B cell (primary cell): ENCODE measurements at regions of chr2 and their contacts with region 1.

Region 1: DNA sequence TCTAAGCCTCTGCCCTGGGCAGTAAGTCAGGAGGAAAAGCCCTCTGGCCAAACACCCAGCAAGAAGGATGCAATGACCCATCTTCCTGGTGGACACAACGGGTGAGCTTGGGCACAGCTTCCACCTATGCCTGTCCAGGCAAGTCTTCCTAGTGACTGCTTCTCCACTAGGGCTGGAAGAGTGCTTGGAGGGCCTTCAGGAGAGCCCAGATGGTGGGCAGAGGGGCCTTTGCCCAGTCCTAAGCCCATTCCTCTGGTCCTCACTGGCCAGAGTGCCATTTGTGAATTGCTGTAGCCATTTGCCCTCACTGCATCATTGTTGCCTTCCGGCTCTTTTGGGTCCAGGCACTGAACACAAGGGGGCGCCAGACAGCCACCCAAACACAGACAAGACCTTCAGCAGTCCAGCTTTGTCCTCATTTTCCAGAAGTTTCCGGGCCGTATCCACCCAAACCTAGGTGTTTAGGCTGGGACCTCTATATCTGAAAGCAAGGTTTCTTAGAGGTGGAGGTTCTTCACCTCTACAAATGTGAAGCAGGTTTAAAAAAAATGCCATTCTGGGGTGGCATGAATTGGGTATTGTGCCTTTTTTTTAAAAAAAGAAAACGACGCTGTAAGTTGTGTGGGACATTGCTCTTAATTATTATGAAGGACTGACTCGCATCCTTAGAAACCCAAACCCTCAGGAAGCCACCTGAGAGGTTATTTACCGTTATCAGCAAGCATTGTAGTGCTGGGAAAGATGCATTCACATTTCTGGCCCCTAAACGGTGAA is 29.5 kb downstream of the PAX8 start:
- DNase-seq: peak; percentile 84
- ATAC-seq: peak; percentile 58
- H3K4me3 ChIP-seq: no peak overlapping the region
- H3K4me3 Mint-ChIP-seq: no peak overlapping the region
- H3K27ac ChIP-seq: no peak overlapping the region
- H3K27ac Mint-ChIP-seq: peak overlapping the region; percentile 28
- H3K4me1 ChIP-seq: peaks cover 6 to 16% of the 10 kb centered on the region in 2 donors
- H3K4me1 Mint-ChIP-seq: peaks cover 13% of the 10 kb centered on the region
- H3K27me3 ChIP-seq: no peaks in the 10 kb centered on the region
- H3K27me3 Mint-ChIP-seq: no peaks in the 10 kb centered on the region
- CTCF ChIP-seq: peak; percentile 94

Region 2: DNA sequence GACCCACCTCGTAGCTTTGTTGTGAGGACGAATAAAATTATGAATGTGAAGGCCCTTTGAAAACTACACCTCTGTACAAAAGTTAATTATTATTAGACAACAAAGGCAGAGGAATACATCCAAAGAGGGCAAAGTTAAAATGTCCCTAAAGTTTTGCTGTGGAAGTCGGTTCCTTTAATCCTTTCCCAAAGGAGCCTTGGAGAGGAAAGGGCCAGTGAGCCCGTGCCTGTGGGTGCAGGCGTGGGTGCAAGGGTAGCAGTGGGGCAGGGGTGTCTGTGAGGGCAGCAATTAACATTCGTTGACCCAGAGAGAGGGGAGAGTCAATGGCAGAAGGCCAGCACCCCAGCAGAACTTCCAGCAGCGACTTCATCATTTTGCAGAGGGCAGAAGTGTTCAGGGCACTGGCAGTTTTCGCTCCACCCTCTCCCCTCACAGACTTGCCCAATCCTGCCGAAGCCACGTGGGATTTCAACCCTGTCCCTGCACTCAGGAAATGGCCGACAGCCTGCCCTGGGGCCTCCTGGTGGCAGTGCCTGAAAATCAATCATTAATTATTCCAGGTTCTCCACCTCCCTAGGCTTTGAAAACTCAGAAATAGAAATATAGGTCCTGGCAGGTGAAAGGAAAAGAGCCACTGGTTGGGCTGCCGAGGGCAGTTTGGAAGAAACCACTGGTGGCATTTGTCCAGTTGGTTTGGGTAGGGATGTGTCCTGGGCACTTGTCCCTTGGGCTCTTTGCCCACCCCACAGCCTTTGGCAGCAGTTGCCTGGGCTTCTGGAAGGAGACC is 33.8 kb after region 1 on chr2:
- CTCF ChIA-PET with region 1: no interaction called
- POLR2A ChIA-PET with region 1: no interaction called
- intact Hi-C with region 1: no loop called
- DNase-seq: no peak
- ATAC-seq: no peak
- H3K4me3 ChIP-seq: no peak overlapping the region
- H3K4me3 Mint-ChIP-seq: no peak overlapping the region
- H3K27ac ChIP-seq: no peak overlapping the region
- H3K27ac Mint-ChIP-seq: no peak overlapping the region
- H3K4me1 ChIP-seq: peaks cover 0 to under 1% of the 10 kb centered on the region in 2 donors
- H3K4me1 Mint-ChIP-seq: no peaks in the 10 kb centered on the region
- H3K27me3 ChIP-seq: peaks cover 0 to 20% (median 4%) of the 10 kb centered on the region in 4 experiments
- H3K27me3 Mint-ChIP-seq: peaks cover 50% of the 10 kb centered on the region
- CTCF ChIP-seq: no peak

Region 3: DNA sequence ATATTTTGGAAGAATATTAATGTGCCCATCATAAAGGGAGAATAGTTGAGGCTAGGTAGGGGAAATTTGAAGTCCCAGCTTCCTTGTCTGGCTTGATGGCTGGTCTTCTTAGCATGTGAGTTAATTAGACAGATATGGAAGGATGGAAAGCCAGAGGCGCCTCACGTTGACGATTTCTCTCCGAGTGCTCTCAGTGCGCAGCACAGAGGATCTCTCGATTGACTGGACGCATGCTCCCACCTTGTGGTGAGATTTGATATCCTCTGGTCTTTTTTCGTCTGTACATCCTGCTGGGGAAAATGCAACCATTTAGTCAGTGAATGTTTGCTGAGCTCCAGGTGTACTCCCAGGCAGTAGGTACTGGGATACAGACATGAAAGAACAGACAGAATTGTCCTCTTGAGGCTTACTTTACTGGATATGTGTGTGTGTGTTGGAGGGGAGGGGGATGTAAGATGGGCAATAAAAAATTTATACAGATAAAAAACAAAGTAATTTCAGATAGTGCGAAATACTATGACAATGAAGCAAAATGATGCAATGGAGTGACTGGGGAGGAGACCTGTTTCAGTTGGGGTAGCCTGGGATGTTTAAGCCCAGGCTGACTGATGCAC is 121.4 kb after region 1 on chr2:
- CTCF ChIA-PET with region 1: interaction called, 23 read pairs
- POLR2A ChIA-PET with region 1: no interaction called
- intact Hi-C with region 1: loop called (anchors 1 kb)
- DNase-seq: peak; percentile 64
- ATAC-seq: peak; percentile 84
- H3K4me3 ChIP-seq: no peak overlapping the region
- H3K4me3 Mint-ChIP-seq: no peak overlapping the region
- H3K27ac ChIP-seq: no peak overlapping the region
- H3K27ac Mint-ChIP-seq: no peak overlapping the region
- H3K4me1 ChIP-seq: no peaks in the 10 kb centered on the region
- H3K4me1 Mint-ChIP-seq: peaks cover 14% of the 10 kb centered on the region
- H3K27me3 ChIP-seq: no peaks in the 10 kb centered on the region
- H3K27me3 Mint-ChIP-seq: no peaks in the 10 kb centered on the region
- CTCF ChIP-seq: peak; percentile 57